Caco-2 (cell line): ENCODE measurements at regions of chr19 and their contacts with region 1.

Region 1: DNA sequence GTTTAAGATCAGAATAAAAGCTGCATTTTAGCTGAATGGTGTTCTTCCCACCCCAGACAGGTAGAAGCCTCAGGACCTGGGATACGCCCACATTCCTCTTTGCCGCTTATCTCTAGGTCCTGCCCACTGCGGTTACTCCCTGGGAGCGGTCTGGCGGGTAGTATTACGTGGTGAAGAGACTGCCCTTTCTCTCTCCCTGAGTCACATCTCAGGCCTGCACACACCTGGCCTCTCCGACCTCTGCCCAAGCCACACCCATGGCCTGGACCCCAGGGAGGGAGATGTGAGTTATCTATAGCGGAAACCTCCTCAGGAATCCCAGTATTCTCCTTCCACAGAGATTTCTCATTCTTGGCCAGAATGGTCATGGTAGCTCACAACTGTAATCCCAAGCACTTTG is 17.3 kb downstream of the RHPN2 start:
- DNase-seq: peak; percentile 97 to 99
- H3K4me3 ChIP-seq: no peak overlapping the region
- H3K4me3 Mint-ChIP-seq: peak overlapping the region; percentile 60
- H3K27ac Mint-ChIP-seq: peak overlapping the region; percentile 95
- H3K4me1 ChIP-seq: peaks cover 64% of the 10 kb centered on the region
- H3K4me1 Mint-ChIP-seq: peaks cover 46% of the 10 kb centered on the region
- H3K27me3 ChIP-seq: no peaks in the 10 kb centered on the region
- H3K27me3 Mint-ChIP-seq: no peaks in the 10 kb centered on the region
- CTCF ChIP-seq: no peak

Region 2: DNA sequence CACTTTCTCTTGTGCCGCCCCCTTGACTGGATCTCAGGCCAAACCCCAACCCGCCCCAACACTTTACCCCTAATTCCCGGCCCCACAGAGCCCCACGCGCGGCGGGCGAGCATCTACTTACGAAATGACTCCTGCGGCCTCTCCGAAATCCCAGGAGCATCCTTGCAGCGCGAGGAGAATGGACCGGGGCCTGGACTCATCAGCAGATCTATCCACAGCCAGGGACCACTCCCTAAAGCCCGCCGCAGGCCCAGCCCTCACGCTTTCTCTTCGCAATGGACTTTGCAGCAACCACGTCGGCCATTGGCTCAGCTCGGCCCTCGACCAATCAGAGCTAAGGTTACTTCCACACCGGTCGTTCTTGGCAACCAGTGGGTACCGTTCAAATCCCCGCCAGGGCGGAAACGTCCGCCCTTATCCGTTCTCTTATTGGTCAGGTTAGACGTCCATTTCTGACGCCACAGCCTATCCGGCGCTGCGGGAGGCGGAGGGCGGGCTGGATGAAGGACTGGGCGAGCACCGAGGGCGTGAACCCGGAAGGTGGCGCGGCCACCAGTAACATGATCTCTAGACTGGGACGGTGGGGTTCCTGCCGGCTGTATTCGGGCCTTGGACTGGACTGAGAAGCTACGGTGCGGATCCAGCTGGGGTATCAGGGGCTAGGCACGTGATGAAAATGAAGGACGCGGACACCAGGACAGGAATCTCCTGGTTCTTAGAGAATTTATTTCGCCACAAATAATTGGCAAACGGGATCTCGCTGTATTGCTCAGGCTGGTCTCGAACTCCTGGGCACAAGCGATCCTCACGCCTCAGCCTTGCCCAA is 75.5 kb before region 1 on chr19 and contains the starts of genes CEP89 and FAAP24:
- CTCF ChIA-PET with region 1: no interaction called
- POLR2A ChIA-PET with region 1: no interaction called
- intact Hi-C with region 1: loop called (anchors 1 kb)
- DNase-seq: peak; percentile 99 to 100
- H3K4me3 ChIP-seq: peak within 1 kb of the TSS; percentile 66
- H3K4me3 Mint-ChIP-seq: peak within 1 kb of the TSS; percentile 88
- H3K27ac Mint-ChIP-seq: peak within 1 kb of the TSS; percentile 91
- H3K4me1 ChIP-seq: no peaks in the 10 kb centered on the region; the same call in 1 of the 2 replicates
- H3K4me1 Mint-ChIP-seq: no peaks in the 10 kb centered on the region
- H3K27me3 ChIP-seq: no peaks in the 10 kb centered on the region
- H3K27me3 Mint-ChIP-seq: no peaks in the 10 kb centered on the region
- CTCF ChIP-seq: no peak
- total RNA-seq, gene CEP89: 14.5 and 17.3 TPM in 2 replicates
- total RNA-seq, gene FAAP24: 9.6 and 12.0 TPM in 2 replicates

Region 3: GRCh38 chr19:33029746-33030303 is 17.6 kb before region 1 on chr19:
- CTCF ChIA-PET with region 1: interaction called, 6 read pairs
- POLR2A ChIA-PET with region 1: interaction called, 4 read pairs
- intact Hi-C with region 1: loop called (anchors 1 kb)
- DNase-seq: no peak
- H3K4me3 ChIP-seq: no peak overlapping the region
- H3K4me3 Mint-ChIP-seq: no peak overlapping the region
- H3K27ac Mint-ChIP-seq: no peak overlapping the region
- H3K4me1 ChIP-seq: peaks cover 17% of the 10 kb centered on the region
- H3K4me1 Mint-ChIP-seq: peaks cover 15% of the 10 kb centered on the region
- H3K27me3 ChIP-seq: no peaks in the 10 kb centered on the region
- H3K27me3 Mint-ChIP-seq: no peaks in the 10 kb centered on the region
- CTCF ChIP-seq: no peak

Region 4: DNA sequence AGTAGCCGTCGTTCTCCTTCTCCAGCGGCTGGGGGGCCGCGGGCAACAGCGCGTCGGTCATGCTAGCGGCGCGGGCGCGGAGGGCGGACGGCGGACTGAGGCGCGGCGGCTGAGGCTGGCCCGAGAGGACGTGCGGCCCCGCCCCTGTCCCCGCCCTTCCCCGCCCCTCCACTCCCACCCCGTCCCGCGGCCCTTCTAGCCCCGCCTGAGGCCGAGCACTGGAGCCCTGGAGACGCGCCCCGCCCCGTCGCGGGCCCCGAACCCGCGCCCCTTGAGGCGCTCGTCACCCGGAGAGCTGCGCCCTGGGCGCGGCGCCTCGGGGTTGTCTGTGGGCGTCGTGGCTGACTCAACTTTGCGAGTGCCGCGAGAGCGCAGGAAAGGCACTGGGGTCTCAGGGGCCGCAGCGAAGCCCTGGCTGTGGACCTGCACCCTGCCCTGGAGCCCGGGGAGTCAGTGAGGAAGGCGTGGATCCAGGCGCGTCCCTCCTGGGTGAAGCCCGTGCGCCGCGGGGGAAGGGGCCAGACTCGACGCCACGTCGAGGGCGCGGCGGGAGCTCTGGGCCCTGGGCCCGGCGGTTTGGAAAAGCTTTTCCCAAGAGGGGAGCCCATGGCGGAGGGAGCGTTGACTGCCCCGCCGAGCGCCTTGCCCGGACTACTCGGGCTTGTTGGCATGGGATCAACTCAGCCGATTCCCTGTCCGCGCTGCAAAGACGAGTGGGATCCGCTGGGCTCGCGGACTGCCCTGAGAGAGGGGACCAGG is 17.6 kb after region 1 on chr19 and contains the start of gene RHPN2:
- CTCF ChIA-PET with region 1: no interaction called
- POLR2A ChIA-PET with region 1: interaction called, 15 read pairs
- intact Hi-C with region 1: loop called (anchors 1 kb)
- DNase-seq: peak; percentile 85 to 87
- H3K4me3 ChIP-seq: peak within 1 kb of the TSS; percentile 98
- H3K4me3 Mint-ChIP-seq: peak within 1 kb of the TSS; percentile 92
- H3K27ac Mint-ChIP-seq: peak within 1 kb of the TSS; percentile 90
- H3K4me1 ChIP-seq: peaks cover 42% of the 10 kb centered on the region
- H3K4me1 Mint-ChIP-seq: peaks cover 18% of the 10 kb centered on the region
- H3K27me3 ChIP-seq: no peaks in the 10 kb centered on the region
- H3K27me3 Mint-ChIP-seq: no peaks in the 10 kb centered on the region
- CTCF ChIP-seq: no peak
- total RNA-seq, gene RHPN2: 69.5 and 78.5 TPM in 2 replicates

Region 5: DNA sequence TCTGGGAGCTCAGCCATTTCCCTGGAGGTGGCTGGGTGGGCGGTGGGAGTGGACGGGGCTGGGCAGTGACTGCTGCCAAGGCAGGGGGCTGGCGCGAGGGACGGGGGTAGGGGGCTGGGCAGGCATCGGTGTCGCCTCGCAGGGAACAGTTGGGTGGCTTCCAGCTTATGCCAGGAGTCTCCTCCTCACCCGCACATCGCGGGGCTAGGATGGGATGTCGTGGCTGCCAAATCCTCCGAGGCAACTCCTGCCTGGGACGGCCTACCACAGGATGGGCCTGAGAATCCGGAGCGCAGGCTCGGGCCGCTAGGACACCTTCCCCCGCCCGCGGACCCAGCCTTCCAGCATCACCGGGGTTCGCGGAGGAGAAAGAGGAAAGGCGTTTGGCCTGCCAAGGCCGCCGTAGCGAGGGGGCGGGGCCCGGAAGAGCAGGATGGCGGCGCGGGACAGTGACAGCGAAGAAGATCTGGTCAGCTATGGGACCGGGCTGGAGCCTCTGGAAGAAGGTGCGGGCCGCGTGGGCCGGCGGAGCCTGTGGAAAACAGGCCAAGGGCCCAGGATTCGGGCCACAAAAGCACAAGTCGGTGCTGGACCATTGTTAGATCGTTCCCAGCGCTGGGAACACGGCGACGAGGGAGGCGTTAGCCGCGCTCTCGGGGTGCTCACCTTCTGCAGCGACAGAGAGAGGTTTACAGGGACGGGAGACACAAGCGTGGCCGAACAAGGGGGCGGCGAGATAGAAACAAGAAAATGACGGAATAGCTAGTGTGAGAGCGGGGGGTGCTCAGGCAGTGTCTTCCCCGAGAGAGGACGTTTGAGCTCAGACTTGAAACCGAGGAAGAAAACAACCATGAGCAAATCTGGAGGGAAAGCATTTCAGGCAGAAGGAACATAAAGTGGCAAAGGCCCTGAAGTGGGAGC is 33.6 kb after region 1 on chr19 and contains the start of gene GPATCH1:
- CTCF ChIA-PET with region 1: interaction called, 3 read pairs
- POLR2A ChIA-PET with region 1: interaction called, 7 read pairs
- intact Hi-C with region 1: loop called (anchors 1 kb)
- DNase-seq: peak; percentile 92 to 95
- H3K4me3 ChIP-seq: peak within 1 kb of the TSS; percentile 76
- H3K4me3 Mint-ChIP-seq: peak within 1 kb of the TSS; percentile 100
- H3K27ac Mint-ChIP-seq: peak within 1 kb of the TSS; percentile 98
- H3K4me1 ChIP-seq: peaks cover 27% of the 10 kb centered on the region
- H3K4me1 Mint-ChIP-seq: peaks cover 29% of the 10 kb centered on the region
- H3K27me3 ChIP-seq: no peaks in the 10 kb centered on the region
- H3K27me3 Mint-ChIP-seq: no peaks in the 10 kb centered on the region
- CTCF ChIP-seq: no peak
- total RNA-seq, gene GPATCH1: 16.1 and 17.1 TPM in 2 replicates

Region 6: GRCh38 chr19:33100894-33101644 is 53.7 kb after region 1 on chr19:
- CTCF ChIA-PET with region 1: interaction called, 3 read pairs
- POLR2A ChIA-PET with region 1: interaction called, 5 read pairs
- intact Hi-C with region 1: loop called (anchors 1 kb)
- DNase-seq: peak; percentile 88 to 90
- H3K4me3 ChIP-seq: no peak overlapping the region
- H3K4me3 Mint-ChIP-seq: peak overlapping the region; percentile 38
- H3K27ac Mint-ChIP-seq: peak overlapping the region; percentile 92
- H3K4me1 ChIP-seq: peaks cover 25% of the 10 kb centered on the region
- H3K4me1 Mint-ChIP-seq: peaks cover 30% of the 10 kb centered on the region
- H3K27me3 ChIP-seq: no peaks in the 10 kb centered on the region
- H3K27me3 Mint-ChIP-seq: no peaks in the 10 kb centered on the region
- CTCF ChIP-seq: no peak

Region 7: GRCh38 chr19:33118643-33119042 is 71.2 kb after region 1 on chr19:
- CTCF ChIA-PET with region 1: no interaction called
- POLR2A ChIA-PET with region 1: no interaction called
- intact Hi-C with region 1: loop called (anchors 5 kb)
- DNase-seq: no peak
- H3K4me3 ChIP-seq: no peak overlapping the region
- H3K4me3 Mint-ChIP-seq: no peak overlapping the region
- H3K27ac Mint-ChIP-seq: peak overlapping the region; percentile 54
- H3K4me1 ChIP-seq: no peaks in the 10 kb centered on the region
- H3K4me1 Mint-ChIP-seq: peaks cover 7% of the 10 kb centered on the region
- H3K27me3 ChIP-seq: no peaks in the 10 kb centered on the region
- H3K27me3 Mint-ChIP-seq: no peaks in the 10 kb centered on the region
- CTCF ChIP-seq: no peak